Cardiac septum (tissue), 1 donor: ENCODE measurements at regions of chr18 and their contacts with region 1.

Region 1: GRCh38 chr18:54983041-54983686 is 23.9 kb upstream of the CCDC68 start:
- DNase-seq: no peak

Region 2: GRCh38 chr18:54444319-54444914 is 538.7 kb before region 1 on chr18:
- intact Hi-C with region 1: loop called (anchors 10 kb)
- DNase-seq: no peak

Region 3: GRCh38 chr18:54558609-54559585 is 424.3 kb before region 1 on chr18:
- intact Hi-C with region 1: loop called (anchors 5 kb)
- DNase-seq: no peak

Region 4: GRCh38 chr18:54679318-54680149 is 303.6 kb before region 1 on chr18:
- intact Hi-C with region 1: loop called (anchors 5 kb)
- DNase-seq: no peak